GM12878 (cell line): ENCODE measurements at regions of chr6 and their contacts with region 1.

Region 1: GRCh38 chr6:259901-260508 is 32.3 kb upstream of the DUSP22 start:
- DNase-seq: peak; percentile 77
- ATAC-seq: peak; percentile 91
- H3K4me3 ChIP-seq: peak overlapping the region; percentile 20
- H3K27ac ChIP-seq: peak overlapping the region; percentile 82
- H3K4me1 ChIP-seq: peaks cover 37% of the 10 kb centered on the region
- H3K27me3 ChIP-seq: no peaks in the 10 kb centered on the region
- CTCF ChIP-seq: no peak
- EP300 ChIP-seq: no peak
- POLR2A ChIP-seq: no peak
- RAD21 ChIP-seq: no peak

Region 2: GRCh38 chr6:235763-236360 is 24.1 kb before region 1 on chr6:
- CTCF ChIA-PET with region 1: interaction called, 5 read pairs
- POLR2A ChIA-PET with region 1: interaction called, 8 read pairs
- RAD21 ChIA-PET with region 1: interaction called, 12 read pairs
- SMC1A ChIA-PET with region 1: interaction called, 37 read pairs
- in situ Hi-C with region 1: no loop called
- intact Hi-C with region 1: no loop called
- DNase-seq: peak; percentile 85
- ATAC-seq: peak; percentile 78
- H3K4me3 ChIP-seq: peak overlapping the region; percentile 16; the same call in 1 of the 2 replicates
- H3K27ac ChIP-seq: peak overlapping the region; percentile 87
- H3K4me1 ChIP-seq: peaks cover 51% of the 10 kb centered on the region
- H3K27me3 ChIP-seq: no peaks in the 10 kb centered on the region
- CTCF ChIP-seq: no peak
- EP300 ChIP-seq: peak in 1 of 2 experiments; percentile 73; a peak in 2 of 4 replicates
- POLR2A ChIP-seq: no peak
- RAD21 ChIP-seq: peak; percentile 37; the same call in 1 of the 2 replicates

Region 3: GRCh38 chr6:241096-241865 is 18.7 kb before region 1 on chr6:
- CTCF ChIA-PET with region 1: interaction called, 4 read pairs
- POLR2A ChIA-PET with region 1: interaction called, 4 read pairs
- RAD21 ChIA-PET with region 1: interaction called, 3 read pairs
- SMC1A ChIA-PET with region 1: interaction called, 37 read pairs
- in situ Hi-C with region 1: no loop called
- intact Hi-C with region 1: no loop called
- DNase-seq: no peak
- ATAC-seq: no peak
- H3K4me3 ChIP-seq: no peak overlapping the region
- H3K27ac ChIP-seq: no peak overlapping the region
- H3K4me1 ChIP-seq: peaks cover 7% of the 10 kb centered on the region
- H3K27me3 ChIP-seq: no peaks in the 10 kb centered on the region
- CTCF ChIP-seq: no peak
- EP300 ChIP-seq: no peak
- POLR2A ChIP-seq: no peak
- RAD21 ChIP-seq: no peak

Region 4: DNA sequence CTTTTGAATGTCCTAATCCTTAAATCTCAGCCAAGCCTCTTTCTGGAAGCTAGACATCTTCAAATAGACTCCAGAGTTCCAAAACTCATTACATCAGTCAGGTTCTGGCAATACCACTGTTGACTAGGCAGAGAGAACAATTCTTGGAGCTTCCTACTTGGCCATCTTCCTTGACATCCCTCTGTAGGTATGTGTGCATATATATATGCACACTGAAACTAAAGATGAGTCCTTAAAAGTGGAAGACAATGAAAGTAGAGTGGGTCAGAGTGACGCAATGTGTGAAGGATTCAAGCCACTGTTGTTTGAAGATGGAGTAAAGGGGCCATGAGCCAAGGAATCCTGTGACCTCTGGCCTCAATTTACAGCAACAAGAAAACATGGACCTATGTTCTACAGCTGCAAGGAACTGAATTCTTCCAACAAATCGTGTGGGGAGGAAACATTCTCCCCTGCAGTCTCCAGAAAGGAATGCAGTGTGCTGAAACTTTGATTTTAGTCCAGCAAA is 13.6 kb after region 1 on chr6:
- CTCF ChIA-PET with region 1: interaction called, 8 read pairs
- POLR2A ChIA-PET with region 1: interaction called, 4 read pairs
- RAD21 ChIA-PET with region 1: interaction called, 6 read pairs
- SMC1A ChIA-PET with region 1: interaction called, 31 read pairs
- in situ Hi-C with region 1: no loop called
- intact Hi-C with region 1: no loop called
- DNase-seq: no peak
- ATAC-seq: no peak
- H3K4me3 ChIP-seq: no peak overlapping the region
- H3K27ac ChIP-seq: no peak overlapping the region
- H3K4me1 ChIP-seq: peaks cover 19% of the 10 kb centered on the region
- H3K27me3 ChIP-seq: no peaks in the 10 kb centered on the region
- CTCF ChIP-seq: no peak
- EP300 ChIP-seq: no peak
- POLR2A ChIP-seq: no peak
- RAD21 ChIP-seq: no peak

Region 5: DNA sequence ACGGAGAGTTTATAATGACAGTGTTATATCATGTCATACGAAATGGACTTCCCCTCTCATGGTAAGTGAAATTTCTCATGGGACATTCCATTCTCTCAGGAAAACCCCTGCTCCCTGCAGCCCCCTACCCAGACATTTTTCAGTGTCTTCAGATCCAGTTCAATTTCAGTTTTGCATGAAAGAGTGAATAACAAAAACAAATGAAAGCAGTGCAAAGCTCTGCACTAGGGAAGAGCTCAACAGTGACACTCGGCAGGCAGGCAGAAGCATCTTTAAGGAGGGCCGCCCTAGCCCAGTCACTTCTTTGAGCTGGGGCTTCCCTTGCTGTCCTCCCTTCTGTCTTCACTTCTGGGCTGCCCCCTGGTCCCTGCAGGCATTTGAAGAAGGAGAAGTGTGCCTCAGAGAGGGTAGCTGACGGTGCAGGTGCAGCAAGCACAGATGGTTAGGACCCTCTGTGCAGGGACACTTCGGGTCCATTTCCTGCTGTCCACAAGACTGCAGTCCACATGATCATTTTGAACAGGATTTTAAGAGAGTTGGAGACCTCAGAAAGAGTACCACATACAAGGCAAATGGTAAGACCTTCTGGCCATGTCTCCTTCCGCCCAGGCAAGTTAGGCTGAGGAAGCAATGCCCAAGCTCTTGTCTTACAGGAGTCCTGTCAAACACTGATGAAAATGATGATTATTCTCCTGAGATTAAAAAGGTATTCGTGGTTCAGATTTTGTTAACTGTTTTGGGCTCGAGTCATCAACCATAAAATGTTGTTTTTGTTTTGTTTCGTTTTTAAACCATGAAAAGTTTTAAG is 26.9 kb after region 1 on chr6:
- CTCF ChIA-PET with region 1: interaction called, 9 read pairs
- POLR2A ChIA-PET with region 1: interaction called, 16 read pairs
- RAD21 ChIA-PET with region 1: interaction called, 73 read pairs
- SMC1A ChIA-PET with region 1: interaction called, 162 read pairs
- in situ Hi-C with region 1: no loop called
- intact Hi-C with region 1: loop called (anchors 2 kb)
- DNase-seq: no peak
- ATAC-seq: peak; percentile 48
- H3K4me3 ChIP-seq: peak overlapping the region; percentile 2; the same call in 1 of the 2 replicates
- H3K27ac ChIP-seq: peak overlapping the region; percentile 53
- H3K4me1 ChIP-seq: peaks cover 54% of the 10 kb centered on the region
- H3K27me3 ChIP-seq: no peaks in the 10 kb centered on the region
- CTCF ChIP-seq: no peak
- EP300 ChIP-seq: 0 out of 4 replicates have a peak, but pooled peaks have one; percentile 42 to 61
- POLR2A ChIP-seq: no peak
- RAD21 ChIP-seq: 0 out of 2 replicates have a peak, but pooled peaks have one; percentile 7

Region 6: GRCh38 chr6:313087-313486 is 53.1 kb after region 1 on chr6:
- CTCF ChIA-PET with region 1: no interaction called
- POLR2A ChIA-PET with region 1: interaction called, 3 read pairs
- RAD21 ChIA-PET with region 1: interaction called, 11 read pairs
- SMC1A ChIA-PET with region 1: interaction called, 13 read pairs
- in situ Hi-C with region 1: no loop called
- intact Hi-C with region 1: no loop called
- DNase-seq: no peak
- ATAC-seq: peak; percentile 1; the same call in 1 of the 3 replicates
- H3K4me3 ChIP-seq: no peak overlapping the region
- H3K27ac ChIP-seq: peak overlapping the region; percentile 65
- H3K4me1 ChIP-seq: peaks cover 93% of the 10 kb centered on the region
- H3K27me3 ChIP-seq: no peaks in the 10 kb centered on the region
- CTCF ChIP-seq: no peak
- EP300 ChIP-seq: no peak
- POLR2A ChIP-seq: no peak
- RAD21 ChIP-seq: no peak